Right cardiac atrium (tissue), 5 donors: ENCODE measurements at regions of chr9 and their contacts with region 1.

Region 1: DNA sequence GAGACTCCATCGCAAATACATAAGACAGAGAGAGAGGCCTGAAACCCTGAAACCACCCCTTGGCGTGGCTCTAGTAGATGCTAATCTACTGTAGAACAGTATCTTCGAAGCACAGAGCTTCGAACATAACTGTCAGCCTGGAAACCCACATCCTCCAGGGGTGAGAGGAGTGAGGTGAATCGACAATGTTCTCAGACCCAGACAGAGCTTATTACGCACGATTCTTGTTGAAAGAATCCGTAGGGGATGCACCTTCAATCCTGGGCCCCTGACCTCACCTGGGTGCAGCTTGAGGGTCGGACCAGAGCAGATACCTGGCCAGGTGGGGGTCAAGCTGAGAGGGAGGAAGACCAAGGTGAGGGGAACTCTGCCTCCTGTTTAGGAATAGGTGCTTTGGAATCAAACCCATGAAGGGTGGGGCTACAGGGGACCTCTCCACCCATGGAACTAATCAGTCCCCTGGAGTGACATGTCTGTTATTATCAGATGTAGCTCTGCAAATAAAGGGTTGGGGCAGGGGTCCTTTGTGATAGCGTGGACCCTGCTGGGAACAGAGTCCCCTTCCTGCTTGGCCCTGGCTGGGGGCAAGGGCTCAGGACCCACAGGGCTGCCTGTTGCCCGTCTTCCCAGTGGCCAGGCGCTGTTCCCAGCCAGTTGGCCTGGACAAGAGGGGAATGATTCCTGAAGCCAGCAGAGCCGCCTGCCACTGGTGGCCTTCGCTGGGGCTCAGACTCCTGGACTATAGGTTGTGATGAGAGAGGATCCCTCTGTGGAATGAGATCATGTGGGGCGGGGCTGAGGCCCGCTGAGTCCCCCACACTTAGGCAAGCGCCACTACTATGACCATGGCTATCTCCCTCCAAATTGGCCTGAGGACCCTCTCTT is 41.2 kb downstream of the DBH start:
- DNase-seq: peak in 2 of 3 donors; percentile 37 to 51
- ATAC-seq: no peak
- H3K4me3 ChIP-seq: no peak overlapping the region
- H3K27ac ChIP-seq: no peak overlapping the region
- H3K4me1 ChIP-seq: no peaks in the 10 kb centered on the region
- H3K27me3 ChIP-seq: no peaks in the 10 kb centered on the region

Region 2: GRCh38 chr9:133589454-133590227 is 87.7 kb before region 1 on chr9:
- intact Hi-C with region 1: loop called in 1 of 4 experiments (anchors 10 kb)
- DNase-seq: peak in 2 of 3 donors; percentile 6 to 55
- ATAC-seq: no peak
- H3K4me3 ChIP-seq: no peak overlapping the region
- H3K27ac ChIP-seq: no peak overlapping the region
- H3K4me1 ChIP-seq: peaks cover 3% of the 10 kb centered on the region
- H3K27me3 ChIP-seq: no peaks in the 10 kb centered on the region